ENCODE measurements at regions of chr22 and their contacts with region 1.

Region 1: DNA sequence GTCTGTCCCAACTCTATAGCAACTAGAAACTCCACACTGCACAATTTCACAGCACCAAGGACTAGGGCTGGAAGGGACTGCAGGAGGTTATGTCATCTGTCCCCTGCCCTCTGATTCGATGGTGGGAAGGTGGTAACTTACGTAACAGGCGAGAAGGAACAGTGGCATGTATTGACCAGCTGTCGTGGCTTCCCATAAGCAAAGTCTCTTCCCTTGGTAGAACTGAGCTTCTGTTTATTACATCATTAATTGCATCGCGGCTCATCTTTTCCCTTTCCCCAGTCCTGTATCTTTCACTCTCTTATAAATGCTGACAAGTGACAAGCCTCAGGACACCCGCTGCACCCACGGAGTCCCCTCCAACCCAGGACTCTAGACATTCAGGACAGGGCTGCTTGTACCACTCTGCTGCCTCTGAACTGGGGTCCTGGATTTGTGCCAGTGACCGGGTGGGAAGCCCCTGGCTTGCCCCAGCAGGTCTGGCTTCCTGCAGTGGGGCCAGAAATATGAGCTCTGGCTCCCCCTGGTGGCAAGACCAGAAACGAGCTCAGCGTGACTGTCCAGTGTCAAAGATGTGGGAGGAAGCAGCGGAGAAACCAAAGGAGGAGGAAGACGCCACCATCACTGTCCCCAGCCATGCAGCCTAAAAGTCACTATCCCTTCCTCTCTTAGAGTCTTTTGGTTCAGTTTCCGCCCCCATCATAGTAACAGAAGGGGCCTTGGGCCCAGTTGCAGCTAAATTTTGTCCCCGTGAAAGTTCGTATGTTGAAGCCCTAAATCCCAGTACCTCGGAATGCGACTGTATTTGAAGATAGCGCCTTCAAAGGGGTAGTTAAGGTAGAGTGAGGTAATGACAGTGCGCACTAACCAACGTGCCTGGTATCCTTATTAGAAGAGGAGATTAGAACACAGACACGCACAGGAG is 84.5 kb downstream of the ISX start:
- DNase-seq: peak; percentile 81
- ATAC-seq: peak; percentile 72
- H3K4me3 Mint-ChIP-seq: no peak overlapping the region
- H3K27ac Mint-ChIP-seq: no peak overlapping the region
- H3K4me1 Mint-ChIP-seq: no peaks in the 10 kb centered on the region
- H3K27me3 Mint-ChIP-seq: peaks cover 20% of the 10 kb centered on the region

Region 2: DNA sequence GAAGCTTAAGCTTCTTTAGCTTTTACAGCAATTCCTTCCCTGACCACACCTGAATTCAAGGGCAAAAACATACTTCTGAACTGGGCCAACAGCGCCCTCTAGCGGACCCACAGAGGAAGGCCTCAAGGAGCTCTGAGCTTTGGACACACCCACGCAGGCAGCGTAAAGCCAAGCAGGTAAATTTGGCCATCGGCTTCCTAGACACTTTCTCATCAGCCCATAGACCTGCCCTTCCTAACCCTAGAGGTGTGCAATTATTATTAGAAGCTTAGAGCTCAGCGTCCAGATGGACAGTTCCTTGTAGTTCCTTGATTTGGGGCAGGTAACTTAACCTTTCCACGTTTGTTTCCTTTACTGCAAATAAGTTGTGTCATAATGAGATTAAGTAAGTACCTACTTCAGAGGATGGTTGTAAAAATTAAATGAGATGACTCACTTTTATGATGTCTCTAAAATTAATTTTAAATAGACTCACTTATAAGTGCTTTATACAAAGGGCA is 81.2 kb after region 1 on chr22:
- CTCF ChIA-PET with region 1: interaction called, 12 read pairs
- POLR2A ChIA-PET with region 1: no interaction called
- intact Hi-C with region 1: loop called in 1 of 2 experiments (anchors 2 kb)
- DNase-seq: peak; percentile 90
- ATAC-seq: peak; percentile 86
- H3K4me3 Mint-ChIP-seq: no peak overlapping the region
- H3K27ac Mint-ChIP-seq: no peak overlapping the region
- H3K4me1 Mint-ChIP-seq: no peaks in the 10 kb centered on the region
- H3K27me3 Mint-ChIP-seq: peaks cover 21% of the 10 kb centered on the region